Caco-2 (cell line): ENCODE measurements at regions of chr2 and their contacts with region 1.

Region 1: DNA sequence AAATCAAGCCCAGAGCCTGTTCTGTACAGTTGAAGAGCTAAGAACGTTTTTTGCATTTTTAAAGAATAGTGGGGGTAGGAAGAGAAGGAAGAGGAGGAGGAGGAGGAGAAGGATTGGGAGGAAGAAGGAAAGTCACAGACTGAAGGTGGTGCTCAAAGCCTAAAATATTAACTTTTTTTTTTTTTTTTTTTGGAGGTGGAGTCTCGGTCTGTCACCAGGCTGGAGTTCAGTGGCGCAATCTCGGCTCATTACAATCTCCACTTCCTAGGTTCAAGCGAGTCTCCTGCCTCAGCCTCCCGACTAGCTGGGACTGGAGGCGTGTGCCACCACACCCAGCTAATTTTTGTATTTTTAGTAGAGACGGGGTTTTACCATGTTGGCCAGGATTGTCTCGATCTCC is 18.3 kb upstream of the KLHL29 start:
- DNase-seq: no peak
- H3K4me3 ChIP-seq: no peak overlapping the region
- H3K4me3 Mint-ChIP-seq: no peak overlapping the region
- H3K27ac Mint-ChIP-seq: no peak overlapping the region
- H3K4me1 ChIP-seq: no peaks in the 10 kb centered on the region
- H3K4me1 Mint-ChIP-seq: peaks cover 6% of the 10 kb centered on the region
- H3K27me3 ChIP-seq: no peaks in the 10 kb centered on the region; the same call in 1 of the 2 replicates
- H3K27me3 Mint-ChIP-seq: peaks cover 27% of the 10 kb centered on the region
- CTCF ChIP-seq: no peak

Region 2: DNA sequence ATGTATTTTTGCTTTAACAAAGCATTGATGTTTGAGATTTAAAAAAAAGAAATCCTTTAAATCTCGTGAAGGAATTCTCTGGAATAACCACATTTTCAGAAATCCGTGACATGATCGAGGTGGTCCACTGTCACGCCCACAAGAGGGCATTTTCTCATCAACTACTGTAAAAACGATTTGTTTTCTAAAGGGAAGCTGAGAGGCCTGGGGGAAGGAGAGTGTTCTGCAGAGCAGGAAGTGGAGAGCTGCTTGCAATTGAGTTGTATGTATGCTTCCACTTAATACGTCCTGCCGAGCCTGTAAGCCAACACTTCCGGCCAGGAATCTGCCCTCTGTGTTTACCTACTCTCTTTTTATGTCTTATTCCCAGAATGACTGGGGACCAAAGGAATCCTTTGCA is 37.7 kb after region 1 on chr2:
- CTCF ChIA-PET with region 1: no interaction called
- POLR2A ChIA-PET with region 1: no interaction called
- intact Hi-C with region 1: no loop called
- DNase-seq: no peak
- H3K4me3 ChIP-seq: no peak overlapping the region
- H3K4me3 Mint-ChIP-seq: no peak overlapping the region
- H3K27ac Mint-ChIP-seq: no peak overlapping the region
- H3K4me1 ChIP-seq: no peaks in the 10 kb centered on the region
- H3K4me1 Mint-ChIP-seq: no peaks in the 10 kb centered on the region
- H3K27me3 ChIP-seq: no peaks in the 10 kb centered on the region; the same call in 1 of the 2 replicates
- H3K27me3 Mint-ChIP-seq: peaks cover 3% of the 10 kb centered on the region
- CTCF ChIP-seq: peak in 1 of 2 experiments; percentile 7

Region 3: GRCh38 chr2:23545396-23545795 is 178.7 kb after region 1 on chr2:
- CTCF ChIA-PET with region 1: no interaction called
- POLR2A ChIA-PET with region 1: no interaction called
- intact Hi-C with region 1: no loop called
- DNase-seq: no peak
- H3K4me3 ChIP-seq: no peak overlapping the region
- H3K4me3 Mint-ChIP-seq: no peak overlapping the region
- H3K27ac Mint-ChIP-seq: no peak overlapping the region
- H3K4me1 ChIP-seq: no peaks in the 10 kb centered on the region
- H3K4me1 Mint-ChIP-seq: no peaks in the 10 kb centered on the region
- H3K27me3 ChIP-seq: no peaks in the 10 kb centered on the region
- H3K27me3 Mint-ChIP-seq: peaks cover 9% of the 10 kb centered on the region
- CTCF ChIP-seq: no peak

Region 4: DNA sequence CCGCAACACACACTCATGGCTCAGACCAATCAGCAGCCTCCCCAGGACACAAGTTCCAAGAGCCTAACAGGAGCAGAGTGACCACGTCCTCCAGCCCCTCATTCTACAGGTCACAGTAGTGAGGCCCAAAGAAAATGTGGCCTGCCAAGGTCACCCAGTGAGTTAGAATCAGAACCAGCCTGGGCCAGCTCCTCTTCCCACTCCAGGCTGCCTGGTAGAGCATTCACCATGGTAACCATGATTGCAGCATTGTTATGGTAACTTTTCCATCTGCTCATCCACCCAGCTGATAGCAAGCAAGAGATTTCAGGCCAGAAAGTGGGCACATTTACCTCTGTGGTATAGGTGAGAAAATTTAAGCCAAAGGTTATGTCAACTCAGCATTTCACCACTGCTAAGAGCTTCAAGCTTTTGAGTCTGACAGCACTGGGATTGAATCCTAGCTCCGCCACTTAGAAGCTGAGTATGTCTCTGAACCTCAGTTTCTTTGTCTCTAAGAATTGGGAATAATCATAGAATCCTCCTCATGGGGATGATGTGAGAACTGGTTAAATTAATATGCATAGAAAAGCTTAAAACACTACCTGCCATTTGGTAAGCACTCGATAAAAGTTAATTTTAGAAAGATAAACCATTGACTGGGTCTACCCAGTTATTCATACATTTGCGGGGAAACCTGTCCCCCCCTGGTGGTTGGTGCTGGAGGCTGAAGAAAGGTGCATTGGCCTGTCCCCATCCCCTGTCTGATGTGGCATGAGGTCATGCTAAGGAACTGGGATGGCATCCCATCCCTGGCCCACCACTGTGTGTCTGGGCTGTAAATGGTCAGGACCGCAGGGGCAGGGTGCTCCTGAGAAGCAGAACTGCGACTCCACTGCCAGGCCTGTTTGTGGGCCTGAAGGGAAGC is 199.8 kb after region 1 on chr2:
- CTCF ChIA-PET with region 1: no interaction called
- POLR2A ChIA-PET with region 1: no interaction called
- intact Hi-C with region 1: loop called (anchors 5 kb)
- DNase-seq: peak in 1 of 2 experiments; percentile 55
- H3K4me3 ChIP-seq: no peak overlapping the region
- H3K4me3 Mint-ChIP-seq: no peak overlapping the region
- H3K27ac Mint-ChIP-seq: no peak overlapping the region
- H3K4me1 ChIP-seq: no peaks in the 10 kb centered on the region
- H3K4me1 Mint-ChIP-seq: no peaks in the 10 kb centered on the region
- H3K27me3 ChIP-seq: no peaks in the 10 kb centered on the region; the same call in 1 of the 2 replicates
- H3K27me3 Mint-ChIP-seq: peaks cover 4% of the 10 kb centered on the region
- CTCF ChIP-seq: peak; percentile 54 to 76